B cell (primary cell): ENCODE measurements at regions of chr20 and their contacts with region 1.

Region 1: DNA sequence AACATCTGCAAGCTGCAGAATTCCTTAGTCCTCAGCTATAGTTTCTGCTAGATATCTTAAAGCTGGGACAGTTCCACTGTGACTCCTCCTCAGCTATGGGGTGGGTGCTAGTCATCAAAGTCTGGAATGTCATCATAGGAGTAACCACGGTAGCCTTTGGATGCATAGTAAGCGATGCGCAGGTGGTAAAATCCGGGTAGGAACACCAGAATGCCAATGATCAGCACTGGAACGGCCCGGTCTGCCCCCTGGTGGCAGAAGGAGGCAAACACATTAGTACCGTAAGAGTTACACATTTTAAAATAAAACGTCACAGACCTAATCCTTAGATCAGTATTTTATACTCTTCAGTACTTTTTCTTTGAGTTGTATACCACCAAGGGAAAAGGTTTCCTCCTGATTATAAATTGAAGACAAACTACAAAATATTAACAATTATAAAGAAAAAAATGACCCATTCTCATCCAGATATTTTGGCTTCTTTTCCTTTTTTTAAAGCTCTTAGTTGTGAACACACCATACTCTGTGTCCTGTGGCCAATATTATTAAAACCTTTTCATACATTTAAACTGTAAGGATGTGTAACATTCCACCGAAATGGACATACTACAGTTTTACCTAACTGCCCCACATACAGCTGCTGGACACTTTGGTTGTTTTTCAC is 18.9 kb downstream of the PCNA start:
- DNase-seq: peak; percentile 79
- ATAC-seq: peak; percentile 86
- H3K4me3 ChIP-seq: no peak overlapping the region
- H3K4me3 Mint-ChIP-seq: no peak overlapping the region
- H3K27ac ChIP-seq: no peak overlapping the region
- H3K27ac Mint-ChIP-seq: peak overlapping the region; percentile 10
- H3K4me1 ChIP-seq: peaks cover 0 to 3% of the 10 kb centered on the region in 2 donors
- H3K4me1 Mint-ChIP-seq: peaks cover 3% of the 10 kb centered on the region
- H3K27me3 ChIP-seq: no peaks in the 10 kb centered on the region
- H3K27me3 Mint-ChIP-seq: no peaks in the 10 kb centered on the region
- CTCF ChIP-seq: peak; percentile 96

Region 2: DNA sequence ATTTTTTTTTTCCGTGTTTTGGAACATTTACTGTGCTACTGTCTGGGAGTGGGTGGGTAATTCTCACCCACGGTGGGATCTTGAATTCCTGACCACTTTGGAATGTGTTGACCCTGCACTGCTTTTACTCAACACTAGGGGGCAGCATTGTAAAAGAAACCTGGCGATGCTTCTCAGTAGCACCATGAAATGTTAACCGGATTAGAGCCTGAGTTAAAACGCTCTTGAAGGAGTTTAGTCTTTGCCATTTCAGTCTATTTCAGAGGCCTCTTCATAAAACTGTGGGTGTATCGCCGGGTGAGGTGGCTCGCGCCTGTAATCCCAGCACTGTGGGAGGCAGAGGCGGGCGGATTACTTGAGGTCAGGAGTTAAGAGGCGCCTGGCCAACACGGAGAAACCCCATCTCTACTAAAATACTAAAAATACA is 493.5 kb before region 1 on chr20:
- CTCF ChIA-PET with region 1: interaction called, 9 read pairs
- POLR2A ChIA-PET with region 1: no interaction called
- intact Hi-C with region 1: loop called (anchors 2 kb)
- DNase-seq: peak; percentile 79
- ATAC-seq: peak; percentile 94
- H3K4me3 ChIP-seq: no peak overlapping the region
- H3K4me3 Mint-ChIP-seq: no peak overlapping the region
- H3K27ac ChIP-seq: no peak overlapping the region
- H3K27ac Mint-ChIP-seq: peak overlapping the region; percentile 32
- H3K4me1 ChIP-seq: peaks cover 5 to 7% of the 10 kb centered on the region in 2 donors
- H3K4me1 Mint-ChIP-seq: peaks cover 12% of the 10 kb centered on the region
- H3K27me3 ChIP-seq: peaks cover 0 to 12% (median 0%) of the 10 kb centered on the region in 4 experiments
- H3K27me3 Mint-ChIP-seq: peaks cover 15% of the 10 kb centered on the region
- CTCF ChIP-seq: peak; percentile 99

Region 3: DNA sequence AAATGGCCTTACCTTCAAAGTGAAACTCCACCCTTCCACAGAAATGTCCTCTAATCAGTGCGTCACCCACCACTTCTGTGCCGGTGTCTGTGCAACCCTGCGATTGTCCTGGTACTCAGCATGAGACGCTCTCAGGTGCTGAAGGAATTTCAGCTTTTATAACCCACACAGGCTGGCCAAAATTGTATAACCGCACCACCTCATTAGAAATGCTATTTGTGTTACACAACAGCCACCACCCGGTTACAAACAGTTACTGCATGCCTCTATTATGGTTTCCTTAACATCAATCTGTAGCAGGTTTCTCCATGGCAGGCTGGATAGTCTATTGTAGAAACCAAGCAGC is 151.0 kb before region 1 on chr20:
- CTCF ChIA-PET with region 1: interaction called, 47 read pairs
- POLR2A ChIA-PET with region 1: no interaction called
- intact Hi-C with region 1: no loop called
- DNase-seq: peak; percentile 63
- ATAC-seq: peak; percentile 66
- H3K4me3 ChIP-seq: peak overlapping the region in 3 of 5 experiments; percentile 23 to 37 (median 33)
- H3K4me3 Mint-ChIP-seq: peak overlapping the region; percentile 89
- H3K27ac ChIP-seq: peak overlapping the region in 1 of 2 donors; percentile 5
- H3K27ac Mint-ChIP-seq: peak overlapping the region; percentile 91
- H3K4me1 ChIP-seq: peaks cover 33 to 40% of the 10 kb centered on the region in 2 donors
- H3K4me1 Mint-ChIP-seq: peaks cover 48% of the 10 kb centered on the region
- H3K27me3 ChIP-seq: no peaks in the 10 kb centered on the region
- H3K27me3 Mint-ChIP-seq: no peaks in the 10 kb centered on the region
- CTCF ChIP-seq: peak; percentile 65

Region 4: DNA sequence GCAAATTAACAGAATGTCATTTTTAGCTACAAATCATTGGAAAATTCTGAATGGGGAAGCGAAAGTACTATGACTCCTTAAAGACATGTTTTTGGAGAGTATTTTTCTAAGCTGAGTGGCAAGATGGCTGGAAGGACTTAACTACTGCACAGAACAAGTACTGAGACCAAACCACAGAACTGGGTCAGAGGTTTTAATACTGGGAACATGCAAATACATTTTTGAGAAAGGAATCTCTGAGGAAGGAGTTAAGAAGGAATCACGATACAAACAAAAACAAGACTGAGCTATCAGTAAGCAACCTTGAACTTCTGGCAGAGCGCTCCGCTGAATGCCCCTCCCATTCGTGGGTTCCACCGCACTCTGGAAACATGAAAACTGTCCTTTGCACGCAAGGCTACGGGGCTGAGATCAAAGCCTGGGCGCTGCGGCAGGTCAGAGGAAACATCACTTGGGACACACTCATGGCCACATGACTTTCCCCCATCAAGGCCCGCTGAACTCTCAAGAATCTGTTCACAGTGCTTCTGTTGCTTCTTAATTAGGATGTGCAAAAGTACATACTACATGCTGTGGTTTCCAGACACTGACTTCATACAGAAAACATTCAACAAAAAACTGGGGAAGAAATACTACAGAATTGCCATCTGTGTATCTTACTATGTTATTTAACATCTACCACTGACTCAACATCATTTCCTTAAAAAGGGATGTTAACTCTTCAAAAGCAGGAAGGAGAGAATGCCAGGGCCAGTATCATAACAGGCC is 127.3 kb before region 1 on chr20:
- CTCF ChIA-PET with region 1: interaction called, 13 read pairs
- POLR2A ChIA-PET with region 1: no interaction called
- intact Hi-C with region 1: no loop called
- DNase-seq: peak; percentile 66
- ATAC-seq: peak; percentile 83
- H3K4me3 ChIP-seq: peak overlapping the region in 4 of 5 experiments; percentile 16 to 58 (median 40)
- H3K4me3 Mint-ChIP-seq: peak overlapping the region; percentile 87
- H3K27ac ChIP-seq: peak overlapping the region; percentile 36 to 40
- H3K27ac Mint-ChIP-seq: peak overlapping the region; percentile 84
- H3K4me1 ChIP-seq: peaks cover 21 to 30% of the 10 kb centered on the region in 2 donors
- H3K4me1 Mint-ChIP-seq: peaks cover 46% of the 10 kb centered on the region
- H3K27me3 ChIP-seq: no peaks in the 10 kb centered on the region
- H3K27me3 Mint-ChIP-seq: no peaks in the 10 kb centered on the region
- CTCF ChIP-seq: no peak

Region 5: GRCh38 chr20:5001174-5002076 is 99.4 kb before region 1 on chr20 and contains the start of gene SLC23A2:
- CTCF ChIA-PET with region 1: interaction called, 16 read pairs
- POLR2A ChIA-PET with region 1: no interaction called
- intact Hi-C with region 1: loop called (anchors 5 kb)
- DNase-seq: peak; percentile 73
- ATAC-seq: peak; percentile 77
- H3K4me3 ChIP-seq: peak within 1 kb of the TSS; percentile 51 to 81 (median 71)
- H3K4me3 Mint-ChIP-seq: peak within 1 kb of the TSS; percentile 97
- H3K27ac ChIP-seq: peak within 1 kb of the TSS; percentile 43 to 71
- H3K27ac Mint-ChIP-seq: peak within 1 kb of the TSS; percentile 97
- H3K4me1 ChIP-seq: peaks cover 28 to 39% of the 10 kb centered on the region in 2 donors
- H3K4me1 Mint-ChIP-seq: peaks cover 37% of the 10 kb centered on the region
- H3K27me3 ChIP-seq: no peaks in the 10 kb centered on the region
- H3K27me3 Mint-ChIP-seq: no peaks in the 10 kb centered on the region
- CTCF ChIP-seq: no peak
- total RNA-seq, gene SLC23A2: 70.7 and 75.2 TPM in 2 replicates

Region 6: GRCh38 chr20:5056801-5057599 is 43.8 kb before region 1 on chr20:
- CTCF ChIA-PET with region 1: interaction called, 76 read pairs
- POLR2A ChIA-PET with region 1: interaction called, 3 read pairs
- intact Hi-C with region 1: loop called (anchors 1 kb)
- DNase-seq: peak; percentile 67
- ATAC-seq: peak; percentile 88
- H3K4me3 ChIP-seq: peak overlapping the region in 2 of 5 experiments; percentile 1 to 7
- H3K4me3 Mint-ChIP-seq: peak overlapping the region; percentile 20
- H3K27ac ChIP-seq: peak overlapping the region in 1 of 2 donors; percentile 53
- H3K27ac Mint-ChIP-seq: peak overlapping the region; percentile 80
- H3K4me1 ChIP-seq: peaks cover 8% of the 10 kb centered on the region in 2 donors
- H3K4me1 Mint-ChIP-seq: peaks cover 13% of the 10 kb centered on the region
- H3K27me3 ChIP-seq: no peaks in the 10 kb centered on the region
- H3K27me3 Mint-ChIP-seq: no peaks in the 10 kb centered on the region
- CTCF ChIP-seq: peak; percentile 59

Region 7: GRCh38 chr20:5191829-5192569 is 91.2 kb after region 1 on chr20:
- CTCF ChIA-PET with region 1: interaction called, 15 read pairs
- POLR2A ChIA-PET with region 1: no interaction called
- intact Hi-C with region 1: no loop called
- DNase-seq: peak; percentile 76
- ATAC-seq: peak; percentile 84
- H3K4me3 ChIP-seq: no peak overlapping the region
- H3K4me3 Mint-ChIP-seq: no peak overlapping the region
- H3K27ac ChIP-seq: peak overlapping the region in 1 of 2 donors; percentile 38
- H3K27ac Mint-ChIP-seq: peak overlapping the region; percentile 56
- H3K4me1 ChIP-seq: peaks cover 0 to 7% of the 10 kb centered on the region in 2 donors
- H3K4me1 Mint-ChIP-seq: peaks cover 9% of the 10 kb centered on the region
- H3K27me3 ChIP-seq: no peaks in the 10 kb centered on the region
- H3K27me3 Mint-ChIP-seq: no peaks in the 10 kb centered on the region
- CTCF ChIP-seq: peak; percentile 77

Region 8: DNA sequence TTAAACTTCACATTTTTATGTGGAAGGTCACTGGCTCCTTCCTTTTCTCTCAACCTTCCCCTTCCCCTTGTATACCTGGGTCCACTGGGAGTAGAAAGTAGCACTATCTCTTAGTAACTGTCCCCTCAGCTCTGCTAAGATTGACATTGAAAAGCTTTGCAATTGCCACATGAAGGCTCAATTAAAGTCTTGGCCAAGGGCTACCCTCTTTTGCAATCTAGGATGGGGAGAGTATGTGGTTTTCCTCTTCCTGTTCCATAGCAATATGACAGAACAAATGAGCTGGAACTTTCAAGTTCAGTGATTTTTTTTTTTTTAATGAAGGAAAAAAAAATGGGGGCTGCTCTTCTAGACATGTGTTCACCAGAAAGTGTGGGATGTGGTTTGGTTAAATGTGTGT is 178.8 kb after region 1 on chr20:
- CTCF ChIA-PET with region 1: no interaction called
- POLR2A ChIA-PET with region 1: no interaction called
- intact Hi-C with region 1: no loop called
- DNase-seq: no peak
- ATAC-seq: no peak
- H3K4me3 ChIP-seq: no peak overlapping the region
- H3K4me3 Mint-ChIP-seq: no peak overlapping the region
- H3K27ac ChIP-seq: no peak overlapping the region
- H3K27ac Mint-ChIP-seq: no peak overlapping the region
- H3K4me1 ChIP-seq: no peaks in the 10 kb centered on the region
- H3K4me1 Mint-ChIP-seq: no peaks in the 10 kb centered on the region
- H3K27me3 ChIP-seq: peaks cover 0 to 6% (median 0%) of the 10 kb centered on the region in 4 experiments
- H3K27me3 Mint-ChIP-seq: peaks cover 52% of the 10 kb centered on the region
- CTCF ChIP-seq: no peak